ENCODE measurements at regions of chr11 and their contacts with region 1.

Region 1: GRCh38 chr11:36376888-36377758 is 81.0 kb downstream of the PRR5L start:
- DNase-seq: peak; percentile 65 to 78
- ATAC-seq: peak; percentile 92 to 95 (median 94)
- H3K4me3 ChIP-seq: peak overlapping the region; percentile 70
- H3K27ac ChIP-seq: no peak overlapping the region
- H3K4me1 ChIP-seq: peaks cover 5% of the 10 kb centered on the region
- H3K27me3 ChIP-seq: peaks cover 0 to 21% (median 11%) of the 10 kb centered on the region in 3 donors
- CTCF ChIP-seq: peak; percentile 50

Region 2: DNA sequence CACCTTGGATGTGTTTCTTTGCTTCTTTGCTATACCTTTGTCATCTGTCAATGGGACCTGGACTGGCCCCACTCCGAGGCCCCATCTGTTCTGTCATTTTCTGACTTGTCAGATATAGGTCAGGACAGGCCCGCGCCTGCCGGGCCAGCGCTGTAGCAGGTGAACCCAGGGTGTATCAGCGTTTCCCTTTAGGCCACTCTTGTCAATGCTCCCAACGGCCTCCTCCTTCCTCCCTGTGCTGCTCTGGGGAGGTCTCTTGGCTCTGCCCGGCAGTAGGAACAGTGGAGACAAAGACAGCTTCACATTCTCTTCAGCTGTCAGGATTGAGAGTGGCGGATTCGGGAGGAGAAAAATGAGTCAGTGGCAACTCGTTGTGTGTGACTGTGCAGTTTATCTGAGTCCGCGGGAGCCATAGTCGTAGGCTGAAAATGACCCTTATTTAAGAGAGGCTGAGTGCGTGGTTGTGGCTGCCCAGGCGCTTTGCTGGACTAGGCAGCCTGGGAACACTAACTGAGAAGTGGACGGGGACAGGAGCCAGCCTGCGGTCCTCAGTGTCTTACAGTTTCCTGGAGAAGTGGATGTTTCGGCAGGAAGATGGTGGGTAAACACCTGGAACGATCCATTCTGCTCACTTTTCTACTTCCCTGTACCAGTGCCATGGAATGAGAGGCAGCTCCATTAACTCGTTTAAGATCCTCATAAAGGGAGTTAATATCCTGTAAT is 21.3 kb after region 1 on chr11:
- intact Hi-C with region 1: no loop called
- DNase-seq: no peak
- ATAC-seq: no peak
- H3K4me3 ChIP-seq: no peak overlapping the region
- H3K27ac ChIP-seq: no peak overlapping the region
- H3K4me1 ChIP-seq: no peaks in the 10 kb centered on the region
- H3K27me3 ChIP-seq: no peaks in the 10 kb centered on the region
- CTCF ChIP-seq: no peak

Region 3: GRCh38 chr11:36492724-36493304 is 115.7 kb after region 1 on chr11:
- intact Hi-C with region 1: loop called in 1 of 2 experiments (anchors 5 kb)
- DNase-seq: no peak
- ATAC-seq: peak in 3 of 4 donors; percentile 53 to 71 (median 66)
- H3K4me3 ChIP-seq: no peak overlapping the region
- H3K27ac ChIP-seq: no peak overlapping the region
- H3K4me1 ChIP-seq: peaks cover 19% of the 10 kb centered on the region
- H3K27me3 ChIP-seq: no peaks in the 10 kb centered on the region
- CTCF ChIP-seq: peak; percentile 81

Region 4: DNA sequence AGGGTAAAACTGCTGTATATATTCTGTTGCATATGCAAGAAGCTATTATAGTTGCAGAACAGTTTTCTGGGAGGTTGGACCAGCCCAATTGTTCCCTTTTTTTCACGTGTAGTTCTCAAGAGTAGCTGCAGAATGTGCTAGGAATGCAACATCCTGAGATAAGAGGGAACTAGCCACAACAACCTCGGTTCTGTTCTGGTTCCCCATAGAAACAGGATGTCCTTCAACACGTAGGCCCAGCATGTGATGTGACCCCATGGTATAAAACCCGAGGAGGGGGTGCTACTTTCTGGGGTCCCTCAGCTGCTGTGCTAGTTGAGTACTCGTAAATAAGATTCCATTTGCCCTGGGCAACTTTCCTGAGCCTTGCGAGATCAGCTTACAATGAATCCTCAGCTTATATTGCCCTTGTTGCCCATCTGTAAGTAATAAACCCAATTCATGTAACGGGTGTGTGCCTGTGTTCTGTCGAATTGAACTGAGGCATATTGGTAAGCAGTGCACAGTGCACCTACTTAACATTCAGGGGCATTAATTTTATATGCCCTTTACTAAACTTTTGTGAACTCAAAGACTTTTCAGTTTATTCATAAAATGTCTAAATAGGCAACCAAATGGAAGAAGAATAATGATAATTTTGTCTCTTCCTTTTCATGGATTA is 155.9 kb after region 1 on chr11:
- intact Hi-C with region 1: no loop called
- DNase-seq: no peak
- ATAC-seq: no peak
- H3K4me3 ChIP-seq: no peak overlapping the region
- H3K27ac ChIP-seq: no peak overlapping the region
- H3K4me1 ChIP-seq: no peaks in the 10 kb centered on the region
- H3K27me3 ChIP-seq: no peaks in the 10 kb centered on the region
- CTCF ChIP-seq: no peak

Region 5: DNA sequence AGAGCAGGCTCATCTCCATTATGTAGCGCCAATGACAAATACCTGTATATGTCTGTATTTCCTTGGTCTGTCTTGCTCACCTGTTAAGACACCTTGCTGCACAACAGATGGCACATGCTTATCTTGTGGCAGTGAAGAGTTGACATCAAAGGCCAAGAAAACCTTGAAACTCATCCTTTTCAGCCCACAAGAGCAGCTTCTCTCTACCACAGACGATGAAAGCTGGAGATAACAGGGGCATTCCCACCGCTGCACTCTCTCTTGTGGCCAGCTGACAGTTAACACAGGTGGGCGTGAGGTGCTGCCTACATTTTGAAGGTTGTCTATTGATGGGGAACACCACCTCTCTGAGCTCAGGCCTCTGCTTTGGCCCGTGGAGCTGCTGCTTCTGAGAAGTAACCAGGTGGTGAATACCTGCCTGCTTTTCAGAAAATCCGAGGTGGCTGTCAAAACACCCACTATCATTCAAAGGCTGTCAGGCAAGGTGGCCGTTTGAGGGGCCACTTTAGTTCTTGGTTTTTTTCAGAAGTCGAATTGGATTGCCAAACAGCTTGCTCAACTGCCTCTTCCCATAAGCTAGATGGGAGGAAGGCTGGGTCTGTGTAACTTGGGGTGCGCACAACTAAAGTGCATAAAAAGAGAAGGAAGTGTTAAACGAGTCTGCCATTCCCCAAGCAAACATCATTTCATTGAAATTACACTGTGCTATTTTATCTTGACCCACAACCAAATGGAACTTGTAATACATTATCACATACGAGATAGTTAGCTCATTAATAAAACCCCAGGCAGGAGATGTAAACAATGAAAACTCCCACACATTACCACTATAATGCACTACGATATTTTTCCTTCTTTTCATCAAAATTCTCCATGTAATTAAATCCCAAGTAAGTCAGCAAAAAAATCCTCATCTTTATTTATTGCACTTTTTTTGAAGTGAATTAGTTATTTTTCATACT is 308.0 kb after region 1 on chr11:
- intact Hi-C with region 1: no loop called
- DNase-seq: no peak
- ATAC-seq: no peak
- H3K4me3 ChIP-seq: no peak overlapping the region
- H3K27ac ChIP-seq: no peak overlapping the region
- H3K4me1 ChIP-seq: no peaks in the 10 kb centered on the region
- H3K27me3 ChIP-seq: peaks cover 0 to 4% (median 0%) of the 10 kb centered on the region in 3 donors
- CTCF ChIP-seq: no peak

Measured in psoas muscle (tissue), 8 donors.